PC-3 (cell line): ENCODE measurements at regions of chr1 and their contacts with region 1.

Region 1: DNA sequence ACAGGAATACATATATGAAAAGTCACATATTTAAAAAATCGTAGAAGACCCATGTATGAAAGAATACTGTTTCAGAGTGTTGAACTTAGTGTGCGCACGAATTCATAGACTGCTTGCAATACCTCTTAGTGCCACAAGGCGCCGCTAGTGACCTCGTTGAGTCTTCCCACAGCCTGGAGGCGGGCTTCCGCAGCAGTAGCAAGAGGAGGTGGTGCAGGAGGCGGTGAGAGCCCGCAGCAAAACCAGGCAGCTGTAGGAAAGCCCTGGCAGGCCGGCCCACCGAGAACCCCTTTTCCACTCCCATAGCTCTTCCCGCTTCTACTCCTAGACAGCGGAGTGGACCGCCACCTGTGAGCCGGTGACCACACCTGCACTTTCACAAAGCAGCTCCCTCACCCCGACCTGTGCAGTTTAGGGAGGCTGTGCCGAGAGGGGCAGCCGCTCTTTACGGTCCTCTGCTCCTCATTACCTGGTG is 23.5 kb downstream of the MTARC1 start:
- DNase-seq: peak; percentile 83
- ATAC-seq: peak; percentile 72
- H3K4me3 ChIP-seq: no peak overlapping the region
- H3K27ac ChIP-seq: no peak overlapping the region
- H3K4me1 ChIP-seq: no peaks in the 10 kb centered on the region
- H3K27me3 ChIP-seq: no peaks in the 10 kb centered on the region
- CTCF ChIP-seq: peak; percentile 95

Region 2: GRCh38 chr1:220873868-220874655 is 63.8 kb after region 1 on chr1:
- CTCF ChIA-PET with region 1: no interaction called
- POLR2A ChIA-PET with region 1: no interaction called
- intact Hi-C with region 1: loop called (anchors 2 kb)
- DNase-seq: peak; percentile 72
- ATAC-seq: peak; percentile 40
- H3K4me3 ChIP-seq: no peak overlapping the region
- H3K27ac ChIP-seq: no peak overlapping the region
- H3K4me1 ChIP-seq: peaks cover 8% of the 10 kb centered on the region; the same call in 1 of the 2 replicates
- H3K27me3 ChIP-seq: no peaks in the 10 kb centered on the region
- CTCF ChIP-seq: peak; percentile 97